PC-9 (cell line): ENCODE measurements at regions of chr13 and their contacts with region 1.

Region 1: DNA sequence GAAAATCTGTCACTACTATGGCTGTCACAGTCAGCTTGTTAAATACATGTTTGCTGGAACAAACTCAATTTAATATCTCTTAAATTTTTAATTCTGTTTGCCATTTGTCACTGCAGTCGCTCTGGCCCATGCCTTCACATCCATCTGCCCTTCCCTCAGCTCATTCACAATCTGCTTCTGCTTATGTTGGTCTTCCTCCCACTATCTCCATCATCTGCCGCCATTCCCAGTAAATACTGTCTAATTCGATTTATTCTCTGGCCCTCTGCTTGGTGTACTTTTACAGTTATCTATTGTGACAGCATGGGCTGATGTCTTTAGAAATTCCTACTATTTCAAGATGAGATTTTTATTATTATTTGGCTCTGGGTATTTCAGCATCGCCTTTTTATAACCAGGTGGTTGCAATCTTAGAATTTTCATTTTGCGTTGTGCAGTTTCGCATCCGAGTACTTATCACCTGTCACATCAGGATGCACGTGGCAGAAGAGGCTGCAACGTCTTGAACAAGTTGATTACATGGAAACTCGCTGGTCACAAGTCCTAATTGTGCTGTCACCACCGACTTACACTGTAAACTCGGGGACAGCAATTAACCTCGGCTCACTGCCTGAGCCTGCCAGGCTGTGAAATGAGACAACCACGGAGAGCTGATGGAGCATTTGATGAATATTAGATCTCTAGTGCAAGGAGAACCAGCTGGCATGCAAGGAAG is 158.4 kb downstream of the MYO16 start:
- DNase-seq: no peak
- H3K4me3 ChIP-seq: no peak overlapping the region
- H3K27ac ChIP-seq: no peak overlapping the region
- H3K4me1 ChIP-seq: no peaks in the 10 kb centered on the region
- H3K27me3 ChIP-seq: no peaks in the 10 kb centered on the region
- CTCF ChIP-seq: no peak

Region 2: DNA sequence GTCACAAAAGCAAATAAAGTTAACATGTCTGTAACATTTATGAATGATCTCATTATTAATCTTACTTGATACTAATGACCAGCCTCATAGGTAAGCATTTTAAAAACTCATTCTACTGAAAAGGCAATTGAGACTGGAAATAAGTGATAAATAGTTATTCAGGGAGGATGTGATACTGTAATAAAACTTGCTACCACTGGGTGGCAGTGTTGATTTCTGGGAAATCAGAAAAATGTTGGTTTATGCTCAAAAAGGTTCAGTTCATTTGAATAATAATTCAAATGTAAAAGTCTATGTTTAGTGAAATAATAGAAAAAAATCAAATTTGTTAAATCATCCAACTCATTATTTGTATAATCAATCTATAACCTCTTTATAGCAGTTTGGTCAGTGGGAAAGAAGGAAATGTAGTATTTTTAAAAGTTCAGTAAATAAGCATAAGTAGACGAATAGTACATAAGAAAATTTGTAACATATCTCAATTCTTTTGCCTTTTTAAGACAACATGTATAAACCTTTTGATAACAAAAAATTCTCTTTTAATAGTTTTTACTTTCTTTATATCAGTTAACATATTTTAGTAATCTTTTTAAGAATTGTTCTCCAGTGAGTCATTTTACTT is 560.1 kb before region 1 on chr13:
- CTCF ChIA-PET with region 1: no interaction called
- POLR2A ChIA-PET with region 1: interaction called, 17 read pairs
- intact Hi-C with region 1: no loop called
- DNase-seq: no peak
- H3K4me3 ChIP-seq: no peak overlapping the region
- H3K27ac ChIP-seq: no peak overlapping the region
- H3K4me1 ChIP-seq: peaks cover 5% of the 10 kb centered on the region; the same call in 1 of the 2 replicates
- H3K27me3 ChIP-seq: no peaks in the 10 kb centered on the region
- CTCF ChIP-seq: peak; percentile 94

Region 3: GRCh38 chr13:108463340-108463739 is 324.5 kb before region 1 on chr13:
- CTCF ChIA-PET with region 1: no interaction called
- POLR2A ChIA-PET with region 1: no interaction called
- intact Hi-C with region 1: no loop called
- DNase-seq: peak in 1 of 2 experiments; percentile 71
- H3K4me3 ChIP-seq: no peak overlapping the region
- H3K27ac ChIP-seq: no peak overlapping the region
- H3K4me1 ChIP-seq: no peaks in the 10 kb centered on the region
- H3K27me3 ChIP-seq: no peaks in the 10 kb centered on the region
- CTCF ChIP-seq: no peak

Region 4: DNA sequence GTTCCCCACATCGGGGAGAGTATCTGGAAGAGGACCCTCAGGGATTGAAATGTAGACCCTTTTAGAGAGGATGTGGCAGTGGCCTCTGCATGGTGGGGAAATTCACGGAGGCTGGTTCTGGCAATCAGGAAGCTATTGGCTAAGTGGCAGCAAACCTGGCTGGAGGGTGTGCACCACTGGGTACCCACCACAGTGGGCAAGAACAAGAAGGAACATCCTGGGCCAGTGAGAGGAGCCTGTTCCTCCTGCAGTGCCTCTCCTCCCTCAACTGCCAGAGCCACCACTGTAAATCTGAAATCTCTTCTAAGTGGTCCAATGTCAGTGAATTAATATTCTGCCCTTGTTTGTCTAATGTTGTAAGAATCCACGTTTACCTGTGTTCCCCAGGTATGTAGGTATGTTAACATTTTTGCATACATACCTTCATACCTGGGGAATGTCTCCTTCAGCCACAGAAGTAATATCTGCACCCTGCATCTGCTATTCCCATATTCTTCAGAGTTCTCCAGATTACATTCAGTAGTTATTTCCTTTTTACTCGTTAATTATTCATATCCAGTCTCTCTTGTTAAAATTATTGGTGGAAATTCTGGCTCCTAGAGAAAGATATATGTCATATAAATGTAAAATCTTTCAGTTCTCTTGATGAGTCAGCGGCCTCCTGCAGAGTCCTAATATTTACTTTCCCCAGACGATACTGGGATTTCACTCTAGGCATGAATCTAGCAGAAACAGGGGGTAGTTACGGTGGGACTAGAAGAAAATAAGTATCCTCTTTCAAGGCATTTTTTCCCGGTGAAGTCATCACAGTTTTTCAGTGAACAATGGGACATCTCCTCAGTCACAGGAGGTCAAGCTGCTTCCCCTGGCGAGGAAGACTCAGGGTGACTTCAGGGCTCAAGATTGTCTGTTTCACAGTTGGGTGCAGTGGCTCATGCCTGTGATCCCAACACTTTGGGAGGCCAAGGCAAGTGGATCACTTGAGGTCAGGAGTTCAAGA is 10.1 kb before region 1 on chr13:
- CTCF ChIA-PET with region 1: no interaction called
- POLR2A ChIA-PET with region 1: interaction called, 12 read pairs
- intact Hi-C with region 1: no loop called
- DNase-seq: peak in 1 of 2 experiments; percentile 75
- H3K4me3 ChIP-seq: no peak overlapping the region
- H3K27ac ChIP-seq: peak overlapping the region; percentile 51
- H3K4me1 ChIP-seq: peaks cover 32% of the 10 kb centered on the region
- H3K27me3 ChIP-seq: no peaks in the 10 kb centered on the region
- CTCF ChIP-seq: no peak